ENCODE measurements at regions of chr7 and their contacts with region 1.

Region 1: GRCh38 chr7:74401137-74401859 is 52.4 kb upstream of the GTF2IRD1 start:
- DNase-seq: peak; percentile 55 to 78 (median 67)
- H3K4me3 ChIP-seq: no peak overlapping the region
- H3K27ac ChIP-seq: no peak overlapping the region
- H3K4me1 ChIP-seq: no peaks in the 10 kb centered on the region
- H3K27me3 ChIP-seq: no peaks in the 10 kb centered on the region

Region 2: DNA sequence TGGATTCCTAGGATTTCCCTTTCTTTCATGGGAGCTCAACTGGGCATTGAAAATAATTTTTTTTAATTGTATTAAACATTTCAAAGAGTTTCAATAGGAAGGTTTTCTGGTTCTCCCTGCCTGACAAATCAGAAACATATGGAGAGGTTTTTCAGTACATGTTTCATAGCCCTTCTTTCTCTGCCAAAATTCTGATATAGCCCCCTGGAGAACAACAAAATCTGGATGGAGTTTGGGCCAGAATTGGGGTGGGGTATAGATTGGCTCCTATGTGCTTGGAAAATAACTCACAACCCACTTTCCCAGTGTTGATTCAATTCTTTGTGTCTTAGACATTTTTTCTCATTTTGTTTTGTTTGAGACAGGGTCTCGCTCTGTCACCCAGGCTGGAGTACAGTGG is 251.7 kb before region 1 on chr7:
- CTCF ChIA-PET with region 1: no interaction called
- POLR2A ChIA-PET with region 1: no interaction called
- DNase-seq: no peak
- H3K4me3 ChIP-seq: no peak overlapping the region
- H3K27ac ChIP-seq: no peak overlapping the region
- H3K4me1 ChIP-seq: no peaks in the 10 kb centered on the region
- H3K27me3 ChIP-seq: no peaks in the 10 kb centered on the region

Region 3: DNA sequence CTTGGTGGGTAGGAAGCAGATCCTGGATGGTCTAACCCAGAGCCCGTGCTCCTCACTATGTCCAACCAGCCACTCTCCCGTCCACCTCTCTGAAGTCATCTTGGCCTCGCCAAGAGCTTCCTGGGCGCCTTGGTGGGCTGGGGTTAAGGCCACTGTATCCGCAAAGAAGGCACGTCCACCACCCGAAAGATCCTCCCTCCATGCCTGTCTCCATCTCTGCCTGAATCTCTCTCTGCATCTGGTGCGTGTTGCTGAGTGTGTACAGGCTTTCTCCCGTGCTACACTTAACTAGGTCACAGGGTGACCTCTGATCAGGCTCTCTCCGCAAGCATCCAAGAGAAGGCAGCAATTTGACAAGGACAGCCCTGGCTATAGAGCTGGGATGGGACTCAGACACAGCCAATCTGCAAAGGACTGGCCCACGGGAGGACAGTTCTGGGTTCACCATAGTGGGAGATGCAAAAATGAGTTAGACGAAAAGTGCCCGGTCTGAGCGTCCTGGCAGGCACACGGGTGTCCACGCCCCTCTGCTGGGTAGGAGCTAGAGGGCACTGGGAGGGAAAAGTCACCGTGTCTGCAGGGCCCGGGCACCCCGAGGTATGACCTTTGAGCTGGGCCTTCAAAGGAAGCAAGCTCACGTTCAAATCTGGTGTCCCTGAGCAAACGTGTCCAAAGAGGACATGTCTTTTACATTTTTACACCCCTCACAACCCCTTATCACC is 137.7 kb before region 1 on chr7:
- CTCF ChIA-PET with region 1: no interaction called
- POLR2A ChIA-PET with region 1: no interaction called
- DNase-seq: no peak
- H3K4me3 ChIP-seq: no peak overlapping the region
- H3K27ac ChIP-seq: no peak overlapping the region
- H3K4me1 ChIP-seq: peaks cover 0 to 28% (median 19%) of the 10 kb centered on the region in 4 experiments
- H3K27me3 ChIP-seq: no peaks in the 10 kb centered on the region

Region 4: GRCh38 chr7:74312418-74313021 is 88.8 kb before region 1 on chr7:
- CTCF ChIA-PET with region 1: no interaction called
- POLR2A ChIA-PET with region 1: no interaction called
- DNase-seq: peak; percentile 68 to 87 (median 83)
- H3K4me3 ChIP-seq: peak overlapping the region in 4 of 7 experiments; percentile 3 to 38 (median 20)
- H3K27ac ChIP-seq: peak overlapping the region; percentile 54 to 76
- H3K4me1 ChIP-seq: peaks cover 0 to 23% (median 12%) of the 10 kb centered on the region in 4 experiments
- H3K27me3 ChIP-seq: no peaks in the 10 kb centered on the region

Region 5: DNA sequence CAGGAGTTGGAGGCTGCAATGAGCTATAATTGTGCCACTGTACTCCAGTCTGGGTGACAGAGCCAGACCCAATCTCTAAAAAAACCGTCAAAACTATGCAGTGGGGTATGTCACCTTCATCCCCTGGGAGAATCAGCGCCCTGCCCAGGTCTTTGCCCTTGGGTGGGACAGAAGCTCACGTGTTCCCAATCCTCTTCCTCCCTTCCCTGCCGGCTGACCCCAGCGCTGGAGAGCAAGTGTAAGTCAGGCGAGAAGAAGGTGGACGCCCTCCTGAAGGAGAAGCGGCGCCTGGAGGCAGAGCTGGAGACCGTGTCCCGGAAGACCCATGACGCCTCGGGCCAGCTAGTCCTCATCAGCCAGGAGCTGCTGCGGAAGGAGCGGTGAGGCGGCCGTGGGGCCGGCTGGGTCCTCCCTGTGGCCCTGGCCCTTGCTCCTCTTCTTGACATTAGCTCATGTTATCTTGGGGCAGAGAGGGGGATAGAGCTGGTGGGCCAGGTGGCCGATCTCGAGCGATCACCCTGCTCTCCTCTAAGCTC is 12.3 kb before region 1 on chr7:
- CTCF ChIA-PET with region 1: interaction called, 29 read pairs
- POLR2A ChIA-PET with region 1: no interaction called
- DNase-seq: no peak
- H3K4me3 ChIP-seq: no peak overlapping the region
- H3K27ac ChIP-seq: no peak overlapping the region
- H3K4me1 ChIP-seq: peaks cover 0 to 5% (median under 1%) of the 10 kb centered on the region in 4 experiments
- H3K27me3 ChIP-seq: no peaks in the 10 kb centered on the region

Region 6: DNA sequence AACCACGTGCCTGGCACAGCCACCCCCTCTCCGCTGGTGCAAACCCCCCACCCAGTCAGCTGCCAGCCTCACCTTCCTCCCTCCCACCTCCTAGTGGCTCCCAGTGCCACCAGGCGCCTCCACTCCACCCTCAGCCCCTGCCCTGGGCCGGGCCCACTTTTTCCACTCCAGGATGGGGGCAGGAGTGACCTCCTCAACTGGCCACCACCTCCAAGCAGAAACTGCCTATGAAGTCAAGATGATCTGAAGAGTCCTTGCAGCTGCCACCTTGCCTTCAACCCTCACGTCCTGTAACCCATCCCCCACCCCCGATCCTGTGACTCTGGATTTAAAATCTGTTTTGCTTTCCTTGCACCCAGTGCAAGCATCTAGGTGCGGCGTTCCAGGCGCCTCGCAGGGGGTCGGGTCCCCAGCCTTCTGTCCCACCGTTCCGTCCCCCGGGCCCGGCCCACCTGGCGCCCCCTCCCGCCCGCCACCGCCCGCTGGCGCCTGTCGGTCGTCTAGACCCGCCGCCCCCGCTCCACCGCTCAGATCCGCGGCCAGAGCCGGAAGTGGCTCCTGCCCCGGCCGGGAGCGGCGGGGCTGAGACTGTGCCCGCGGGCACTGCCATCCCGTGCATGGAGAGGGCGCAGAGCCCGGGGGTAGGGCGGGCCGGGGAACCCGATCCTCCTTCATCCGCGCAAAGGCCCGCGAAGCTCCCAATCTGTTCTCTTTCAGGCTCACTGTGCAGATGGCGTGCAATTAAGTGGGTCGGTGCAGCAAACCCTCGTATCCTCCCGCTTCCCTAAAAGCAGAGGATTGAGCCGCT is 205.0 kb after region 1 on chr7:
- CTCF ChIA-PET with region 1: no interaction called
- POLR2A ChIA-PET with region 1: no interaction called
- DNase-seq: peak in 2 of 3 donors; percentile 54 to 63
- H3K4me3 ChIP-seq: peak overlapping the region in 6 of 7 experiments; percentile 19 to 70 (median 47)
- H3K27ac ChIP-seq: no peak overlapping the region
- H3K4me1 ChIP-seq: peaks cover 0 to 13% (median 8%) of the 10 kb centered on the region in 4 experiments
- H3K27me3 ChIP-seq: no peaks in the 10 kb centered on the region